Posterior vena cava (tissue), 2 donors: ENCODE measurements at regions of chr11 and their contacts with region 1.

Region 1: GRCh38 chr11:60985991-60986915 is 14.8 kb downstream of the CD6 start:
- DNase-seq: no peak

Region 2: DNA sequence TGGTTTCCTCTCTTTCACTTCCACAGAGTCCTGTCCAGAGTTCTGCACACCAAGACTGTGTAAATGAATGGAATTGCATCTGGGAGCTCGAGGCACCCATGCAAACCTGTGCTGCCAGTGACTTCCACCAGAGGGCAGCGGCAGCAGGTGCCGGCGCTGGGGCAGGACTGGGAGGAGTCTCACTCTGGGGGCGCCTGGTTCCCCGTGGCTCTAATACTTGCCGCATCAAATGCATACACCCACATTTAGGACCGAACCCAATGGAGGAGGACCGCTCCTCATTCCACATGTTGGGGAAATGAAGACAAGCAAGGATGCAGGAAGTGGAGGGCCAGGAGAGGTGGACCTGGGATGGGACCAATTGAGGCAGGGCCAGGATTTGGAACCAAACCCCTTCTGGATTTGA is 15.9 kb before region 1 on chr11:
- intact Hi-C with region 1: no loop called
- DNase-seq: peak; percentile 87

Region 3: DNA sequence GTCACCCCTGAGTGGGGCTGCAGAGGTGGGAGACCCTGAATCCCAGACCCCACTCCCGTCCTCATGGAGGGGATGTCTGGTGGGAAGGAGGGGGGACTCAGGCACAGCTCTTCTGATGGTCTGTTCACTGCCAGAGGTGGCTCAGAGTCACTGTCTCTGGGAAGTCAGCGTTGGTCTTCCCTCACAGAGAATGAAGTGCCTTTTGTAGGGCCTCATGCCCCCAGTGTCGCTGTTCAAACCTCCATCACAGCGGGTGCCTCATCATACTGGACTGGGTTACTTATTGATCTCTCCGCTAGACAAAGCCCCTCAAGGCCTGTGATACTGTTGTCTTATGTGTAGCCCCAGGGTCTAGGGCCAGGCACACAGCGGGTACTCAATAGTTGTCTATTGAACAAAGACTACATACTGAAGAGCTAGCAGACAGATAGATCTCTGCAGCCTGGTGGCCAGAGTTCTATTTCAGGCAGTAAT is 26.5 kb after region 1 on chr11:
- intact Hi-C with region 1: loop called in 1 of 2 experiments (anchors 1 kb)
- DNase-seq: no peak

Region 4: GRCh38 chr11:61111786-61112517 is 125.7 kb after region 1 on chr11:
- intact Hi-C with region 1: loop called in 1 of 2 experiments (anchors 10 kb)
- DNase-seq: peak; percentile 65

Region 5: GRCh38 chr11:61195719-61196118 is 209.5 kb after region 1 on chr11:
- intact Hi-C with region 1: no loop called
- DNase-seq: no peak

Region 6: DNA sequence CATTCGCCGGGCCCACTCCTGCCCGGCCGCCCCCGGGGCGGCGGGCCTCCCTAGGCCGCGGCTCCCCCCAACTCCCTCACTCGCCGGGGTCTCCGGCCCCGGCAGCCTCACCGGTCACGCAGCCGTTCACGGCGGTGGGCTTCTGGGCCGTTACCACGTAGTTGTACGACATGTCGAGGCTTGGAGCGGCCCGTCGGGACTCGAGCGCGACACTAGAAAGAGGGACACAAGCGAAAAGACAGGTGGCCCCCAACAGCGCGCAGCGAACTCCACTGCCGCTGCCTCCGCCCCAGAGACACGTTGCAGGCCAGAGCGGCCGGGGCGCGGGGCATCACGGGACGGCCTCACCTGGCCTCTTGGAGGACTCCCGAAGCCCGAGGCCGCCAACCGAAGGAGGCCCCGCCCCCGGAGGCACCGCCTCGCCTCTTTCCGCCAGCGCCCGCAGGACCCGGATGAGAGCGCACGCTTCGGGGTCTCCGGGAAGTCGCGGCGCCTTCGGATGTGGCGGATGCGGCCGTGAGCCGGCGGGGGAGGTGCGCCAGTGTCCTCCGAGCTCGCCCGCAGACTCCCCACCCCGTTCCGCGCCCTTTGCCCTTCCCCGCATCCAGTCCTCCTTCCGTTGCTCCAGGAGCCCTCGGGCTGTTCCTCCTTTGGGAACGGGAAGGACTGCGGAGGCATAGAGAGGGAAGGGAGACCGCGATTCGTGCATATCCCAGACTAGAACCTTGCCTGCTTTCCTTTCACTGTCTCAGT is 346.7 kb after region 1 on chr11 and contains the starts of genes DDB1 and TKFC:
- intact Hi-C with region 1: no loop called
- DNase-seq: peak; percentile 98
- total RNA-seq, gene DDB1: 142 to 151 TPM
- total RNA-seq, gene TKFC: 15.2 to 24.6 TPM